Gastrocnemius medialis (tissue), 4 donors: ENCODE measurements at regions of chr11 and their contacts with region 1.

Region 1: DNA sequence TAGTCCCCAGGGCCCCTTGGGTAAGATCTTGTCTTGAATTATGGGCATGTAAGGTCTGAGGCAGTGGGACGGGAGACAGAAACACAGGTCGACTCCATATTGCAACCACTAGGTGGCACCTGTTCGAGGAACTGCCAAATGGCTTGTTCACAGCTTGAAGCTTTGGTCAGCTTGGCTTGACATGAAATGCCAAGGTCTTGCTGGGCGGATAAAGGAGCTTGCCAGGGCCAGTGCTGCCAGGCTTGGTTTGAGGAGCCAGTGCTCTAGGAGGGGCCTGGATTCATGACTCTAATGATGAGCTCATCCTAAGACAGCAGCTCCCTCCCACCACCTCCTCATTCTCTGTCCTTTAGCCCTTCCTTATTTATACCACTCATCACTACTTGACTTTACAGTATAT is 11.9 kb upstream of the NRIP3 start:
- DNase-seq: peak; percentile 50 to 59
- ATAC-seq: peak; percentile 92 to 96
- H3K4me3 ChIP-seq: no peak overlapping the region
- H3K27ac ChIP-seq: no peak overlapping the region
- H3K4me1 ChIP-seq: peaks cover 0 to 16% of the 10 kb centered on the region in 2 donors
- H3K27me3 ChIP-seq: no peaks in the 10 kb centered on the region
- CTCF ChIP-seq: peak in 4 of 5 experiments; percentile 60 to 78 (median 72)
- POLR2A ChIP-seq: no peak

Region 2: GRCh38 chr11:9053316-9054035 is 37.8 kb after region 1 on chr11:
- in situ Hi-C with region 1: no loop called
- intact Hi-C with region 1: no loop called
- DNase-seq: no peak
- ATAC-seq: no peak
- H3K4me3 ChIP-seq: no peak overlapping the region
- H3K27ac ChIP-seq: no peak overlapping the region
- H3K4me1 ChIP-seq: peaks cover 0 to 7% of the 10 kb centered on the region in 2 donors
- H3K27me3 ChIP-seq: no peaks in the 10 kb centered on the region
- CTCF ChIP-seq: no peak
- POLR2A ChIP-seq: no peak

Region 3: GRCh38 chr11:9092853-9093778 is 77.4 kb after region 1 on chr11:
- in situ Hi-C with region 1: no loop called
- intact Hi-C with region 1: no loop called
- DNase-seq: no peak
- ATAC-seq: no peak
- H3K4me3 ChIP-seq: no peak overlapping the region
- H3K27ac ChIP-seq: no peak overlapping the region
- H3K4me1 ChIP-seq: peaks cover 0 to 5% of the 10 kb centered on the region in 2 donors
- H3K27me3 ChIP-seq: peaks cover 5 to 17% (median 9%) of the 10 kb centered on the region in 3 donors
- CTCF ChIP-seq: no peak
- POLR2A ChIP-seq: no peak

Region 4: DNA sequence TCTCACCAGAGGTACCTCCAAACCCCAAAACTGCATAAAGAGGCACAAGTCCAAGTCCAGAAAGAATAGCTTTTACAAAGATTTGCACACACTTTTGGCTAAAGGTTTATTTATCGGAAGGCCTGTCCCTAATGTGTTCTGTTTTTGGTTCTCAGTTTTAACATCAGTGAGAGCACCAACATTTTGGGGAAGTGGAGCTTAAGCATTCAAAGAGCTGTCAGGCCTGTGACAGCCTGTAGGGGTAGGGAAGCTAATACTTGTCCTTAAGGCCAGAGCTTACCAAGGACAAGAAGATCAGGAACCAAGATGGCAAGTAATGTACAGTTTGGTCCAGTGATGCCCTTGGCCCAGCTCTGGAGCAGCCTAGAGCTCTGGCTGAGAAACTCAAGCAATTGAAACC is 114.6 kb after region 1 on chr11:
- in situ Hi-C with region 1: loop called (anchors 5 to 10 kb)
- intact Hi-C with region 1: no loop called
- DNase-seq: no peak
- ATAC-seq: no peak
- H3K4me3 ChIP-seq: no peak overlapping the region
- H3K27ac ChIP-seq: no peak overlapping the region
- H3K4me1 ChIP-seq: peaks cover 0 to 5% of the 10 kb centered on the region in 2 donors
- H3K27me3 ChIP-seq: no peaks in the 10 kb centered on the region
- CTCF ChIP-seq: no peak
- POLR2A ChIP-seq: no peak

Region 5: GRCh38 chr11:9137293-9138132 is 121.8 kb after region 1 on chr11:
- in situ Hi-C with region 1: loop called (anchors 5 to 10 kb)
- intact Hi-C with region 1: loop called (anchors 1 kb)
- DNase-seq: peak; percentile 27 to 59
- ATAC-seq: peak; percentile 79 to 92
- H3K4me3 ChIP-seq: no peak overlapping the region
- H3K27ac ChIP-seq: peak overlapping the region in 1 of 4 donors; percentile 37
- H3K4me1 ChIP-seq: peaks cover 0 to 11% of the 10 kb centered on the region in 2 donors
- H3K27me3 ChIP-seq: no peaks in the 10 kb centered on the region
- CTCF ChIP-seq: peak; percentile 73 to 91 (median 81)
- POLR2A ChIP-seq: no peak

Region 6: DNA sequence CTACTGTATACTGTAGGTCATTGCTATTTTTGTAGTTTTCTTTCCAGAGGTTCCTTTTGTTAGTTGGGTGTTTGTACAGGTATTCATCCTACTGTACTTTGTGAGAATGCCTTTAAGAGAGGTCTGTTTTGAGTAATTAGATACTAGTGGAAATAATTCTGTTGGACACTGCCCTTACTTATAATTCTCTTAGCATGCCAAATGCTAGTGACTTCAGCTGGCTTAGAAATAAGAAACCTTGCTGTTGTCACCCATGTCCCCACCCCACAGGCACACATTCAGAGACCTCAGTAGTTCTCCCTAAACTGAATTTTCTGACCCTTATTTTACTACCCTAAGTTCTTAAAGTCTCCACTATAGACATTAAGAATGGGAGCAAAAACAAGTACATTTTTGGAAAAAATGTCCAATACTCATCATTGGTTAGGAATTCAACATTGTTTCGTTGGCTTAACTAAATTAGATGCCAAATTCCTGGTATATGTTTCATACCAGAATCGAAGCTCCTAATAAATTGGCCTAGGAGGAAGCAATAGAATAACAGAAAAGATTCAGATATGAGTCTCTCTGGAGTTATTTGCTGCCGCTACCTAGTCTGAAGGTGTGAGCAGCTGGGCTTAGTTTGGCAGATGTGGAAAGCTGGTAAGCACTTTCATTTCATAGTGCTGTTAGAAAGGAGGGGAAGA is 473.5 kb after region 1 on chr11:
- in situ Hi-C with region 1: loop called in 2 of 4 experiments (anchors 25 kb)
- intact Hi-C with region 1: no loop called
- DNase-seq: no peak
- ATAC-seq: no peak
- H3K4me3 ChIP-seq: no peak overlapping the region
- H3K27ac ChIP-seq: peak overlapping the region in 3 of 4 donors; percentile 37 to 46 (median 38)
- H3K4me1 ChIP-seq: peaks cover 11 to 23% of the 10 kb centered on the region in 2 donors
- H3K27me3 ChIP-seq: no peaks in the 10 kb centered on the region
- CTCF ChIP-seq: no peak
- POLR2A ChIP-seq: no peak